Naive thymus-derived CD4-positive, alpha-beta T cell (primary cell): ENCODE measurements at regions of chr9 and their contacts with region 1.

Region 1: GRCh38 chr9:93095205-93096130 is 549 bp upstream of the CARD19 start:
- DNase-seq: peak; percentile 99 to 100 (median 100)
- ATAC-seq: peak; percentile 88
- H3K4me3 ChIP-seq: peak overlapping the region; percentile 72
- H3K4me3 Mint-ChIP-seq: peak overlapping the region; percentile 83 to 95 (median 90)
- H3K27ac ChIP-seq: peak overlapping the region; percentile 93
- H3K27ac Mint-ChIP-seq: peak overlapping the region; percentile 93 to 99 (median 96)
- H3K4me1 ChIP-seq: peaks cover 41 to 58% of the 10 kb centered on the region in 2 donors
- H3K4me1 Mint-ChIP-seq: peaks cover 49 to 81% (median 71%) of the 10 kb centered on the region in 7 donors
- H3K27me3 ChIP-seq: no peaks in the 10 kb centered on the region
- H3K27me3 Mint-ChIP-seq: no peaks in the 10 kb centered on the region

Region 2: DNA sequence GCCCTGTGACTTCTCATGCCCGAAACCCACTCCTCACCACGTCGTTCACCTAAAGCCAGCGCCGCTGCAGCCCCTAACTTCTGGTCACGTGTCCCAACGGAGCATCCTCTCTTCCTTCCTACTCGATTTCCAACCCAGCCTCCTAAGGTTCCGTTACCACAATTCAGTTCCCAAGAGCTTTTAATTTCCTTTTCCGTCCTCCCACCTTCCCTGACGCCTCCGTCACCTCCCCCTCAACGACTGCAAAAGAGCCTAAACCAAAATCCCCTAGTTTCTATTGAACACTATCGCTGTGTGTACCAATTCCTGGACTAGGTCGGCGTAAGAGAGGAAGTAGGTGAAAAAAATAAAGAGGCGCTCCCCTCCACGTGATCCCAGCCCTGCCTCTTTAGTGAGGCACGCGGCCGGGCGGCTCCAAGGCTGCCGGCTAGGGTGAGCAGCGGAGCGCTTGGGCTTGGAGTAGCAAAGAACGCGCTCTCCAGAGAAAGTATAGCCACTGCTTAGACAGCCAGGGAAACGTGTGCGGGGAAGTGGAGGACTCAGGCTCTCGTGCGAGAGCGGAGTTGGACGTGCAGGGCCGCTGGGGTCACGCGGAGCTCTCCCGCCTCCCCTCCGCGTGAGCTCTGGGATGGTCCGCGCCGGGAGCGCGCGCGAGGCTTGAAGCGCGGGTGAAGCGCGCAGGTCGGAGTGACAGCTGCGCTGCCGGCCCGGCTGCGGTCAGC is 770.0 kb before region 1 on chr9 and contains the starts of genes CENPP and NOL8:
- CTCF ChIA-PET with region 1: no interaction called
- POLR2A ChIA-PET with region 1: no interaction called
- intact Hi-C with region 1: loop called in 1 of 2 experiments (anchors 10 kb)
- DNase-seq: peak; percentile 75 to 91 (median 89)
- ATAC-seq: peak; percentile 95
- H3K4me3 ChIP-seq: peak within 1 kb of the TSS; percentile 90
- H3K4me3 Mint-ChIP-seq: peak within 1 kb of the TSS; percentile 94 to 100 (median 98)
- H3K27ac ChIP-seq: peak within 1 kb of the TSS; percentile 88
- H3K27ac Mint-ChIP-seq: peak within 1 kb of the TSS; percentile 97 to 100 (median 99)
- H3K4me1 ChIP-seq: peaks cover 11 to 12% of the 10 kb centered on the region in 2 donors
- H3K4me1 Mint-ChIP-seq: peaks cover 14 to 41% (median 35%) of the 10 kb centered on the region in 7 donors
- H3K27me3 ChIP-seq: no peaks in the 10 kb centered on the region
- H3K27me3 Mint-ChIP-seq: no peaks in the 10 kb centered on the region
- total RNA-seq, gene CENPP: 2.5 to 24.3 (median 4.1) TPM
- total RNA-seq, gene NOL8: 42.8 to 115 (median 67.2) TPM

Region 3: GRCh38 chr9:92877531-92878430 is 217.7 kb before region 1 on chr9 and contains the start of gene ZNF484:
- CTCF ChIA-PET with region 1: no interaction called
- POLR2A ChIA-PET with region 1: no interaction called
- intact Hi-C with region 1: loop called (anchors 1 to 5 kb)
- DNase-seq: peak; percentile 86 to 97 (median 94)
- ATAC-seq: peak; percentile 99
- H3K4me3 ChIP-seq: peak within 1 kb of the TSS; percentile 77
- H3K4me3 Mint-ChIP-seq: peak within 1 kb of the TSS; percentile 91 to 100 (median 99)
- H3K27ac ChIP-seq: peak within 1 kb of the TSS; percentile 90
- H3K27ac Mint-ChIP-seq: peak within 1 kb of the TSS; percentile 94 to 100 (median 99)
- H3K4me1 ChIP-seq: peaks cover 0 to 15% of the 10 kb centered on the region in 2 donors
- H3K4me1 Mint-ChIP-seq: peaks cover 28 to 69% (median 58%) of the 10 kb centered on the region in 7 donors
- H3K27me3 ChIP-seq: no peaks in the 10 kb centered on the region
- H3K27me3 Mint-ChIP-seq: no peaks in the 10 kb centered on the region
- total RNA-seq, gene ZNF484: 12.4 to 25.4 (median 14.0) TPM

Region 4: GRCh38 chr9:93028448-93029006 is 66.9 kb before region 1 on chr9:
- CTCF ChIA-PET with region 1: interaction called, 4 read pairs
- POLR2A ChIA-PET with region 1: interaction called, 39 read pairs
- intact Hi-C with region 1: loop called (anchors 1 kb)
- DNase-seq: peak; percentile 38 to 94 (median 91)
- ATAC-seq: peak; percentile 93
- H3K4me3 ChIP-seq: peak overlapping the region; percentile 49
- H3K4me3 Mint-ChIP-seq: peak overlapping the region; percentile 80 to 91 (median 88)
- H3K27ac ChIP-seq: peak overlapping the region; percentile 90
- H3K27ac Mint-ChIP-seq: peak overlapping the region; percentile 96 to 100 (median 99)
- H3K4me1 ChIP-seq: peaks cover 62 to 93% of the 10 kb centered on the region in 2 donors
- H3K4me1 Mint-ChIP-seq: peaks cover 54 to 93% (median 82%) of the 10 kb centered on the region in 7 donors
- H3K27me3 ChIP-seq: no peaks in the 10 kb centered on the region
- H3K27me3 Mint-ChIP-seq: no peaks in the 10 kb centered on the region

Region 5: GRCh38 chr9:93082841-93083411 is 12.5 kb before region 1 on chr9:
- CTCF ChIA-PET with region 1: interaction called, 5 read pairs
- POLR2A ChIA-PET with region 1: interaction called, 14 read pairs
- intact Hi-C with region 1: loop called in 1 of 2 experiments (anchors 1 kb)
- DNase-seq: peak in 1 of 9 donors; percentile 25
- ATAC-seq: peak; percentile 36
- H3K4me3 ChIP-seq: no peak overlapping the region
- H3K4me3 Mint-ChIP-seq: peak overlapping the region in 7 of 10 donors; percentile 1 to 65 (median 57)
- H3K27ac ChIP-seq: peak overlapping the region; percentile 68
- H3K27ac Mint-ChIP-seq: peak overlapping the region; percentile 49 to 98 (median 95)
- H3K4me1 ChIP-seq: peaks cover 18 to 25% of the 10 kb centered on the region in 2 donors
- H3K4me1 Mint-ChIP-seq: peaks cover 10 to 47% (median 31%) of the 10 kb centered on the region in 7 donors
- H3K27me3 ChIP-seq: no peaks in the 10 kb centered on the region
- H3K27me3 Mint-ChIP-seq: no peaks in the 10 kb centered on the region

Region 6: DNA sequence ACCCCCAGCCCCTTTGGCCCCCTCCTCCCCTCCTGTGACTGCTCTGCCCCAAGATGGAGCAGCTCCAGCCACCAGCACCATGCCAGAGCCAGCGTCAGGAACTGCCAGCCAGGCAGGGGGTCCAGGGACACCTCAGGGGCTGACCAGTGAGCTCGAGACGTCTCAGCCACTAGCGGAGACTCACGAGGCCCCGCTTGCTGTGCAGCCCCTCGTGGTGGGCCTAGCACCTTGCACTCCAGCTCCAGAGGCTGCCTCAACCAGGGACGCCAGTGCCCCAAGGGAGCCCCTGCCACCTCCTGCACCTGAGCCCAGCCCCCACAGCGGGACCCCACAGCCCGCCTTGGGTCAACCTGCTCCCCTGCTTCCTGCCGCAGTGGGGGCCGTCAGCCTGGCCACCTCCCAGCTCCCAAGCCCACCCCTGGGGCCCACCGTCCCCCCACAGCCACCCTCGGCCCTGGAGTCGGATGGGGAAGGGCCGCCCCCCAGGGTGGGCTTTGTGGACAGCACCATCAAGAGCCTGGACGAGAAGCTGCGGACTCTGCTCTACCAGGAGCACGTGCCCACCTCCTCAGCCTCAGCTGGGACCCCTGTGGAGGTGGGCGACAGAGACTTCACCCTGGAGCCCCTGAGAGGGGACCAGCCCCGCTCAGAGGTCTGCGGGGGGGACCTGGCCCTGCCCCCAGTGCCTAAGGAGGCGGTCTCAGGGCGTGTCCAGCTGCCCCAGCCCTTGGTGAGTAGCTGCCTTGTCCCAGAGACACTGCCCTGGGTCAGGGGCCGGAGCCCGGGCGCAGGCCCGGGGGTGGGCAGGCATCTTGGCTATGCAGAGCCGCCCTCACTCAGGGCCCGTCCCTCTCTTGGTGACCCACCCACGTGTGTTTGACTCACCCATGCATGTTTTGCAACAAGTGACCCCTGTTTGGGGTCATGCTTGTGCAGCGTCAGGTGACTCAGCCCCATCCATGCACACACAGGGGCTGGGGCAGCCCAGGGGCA is 193.7 kb after region 1 on chr9:
- CTCF ChIA-PET with region 1: no interaction called
- POLR2A ChIA-PET with region 1: no interaction called
- intact Hi-C with region 1: no loop called
- DNase-seq: no peak
- ATAC-seq: peak; percentile 14
- H3K4me3 ChIP-seq: no peak overlapping the region
- H3K4me3 Mint-ChIP-seq: no peak overlapping the region
- H3K27ac ChIP-seq: no peak overlapping the region
- H3K27ac Mint-ChIP-seq: peak overlapping the region in 1 of 9 donors; percentile 50
- H3K4me1 ChIP-seq: no peaks in the 10 kb centered on the region
- H3K4me1 Mint-ChIP-seq: peaks cover 0 to 11% (median 7%) of the 10 kb centered on the region in 7 donors
- H3K27me3 ChIP-seq: no peaks in the 10 kb centered on the region
- H3K27me3 Mint-ChIP-seq: peaks cover 0 to 14% (median 0%) of the 10 kb centered on the region in 5 donors

Region 7: DNA sequence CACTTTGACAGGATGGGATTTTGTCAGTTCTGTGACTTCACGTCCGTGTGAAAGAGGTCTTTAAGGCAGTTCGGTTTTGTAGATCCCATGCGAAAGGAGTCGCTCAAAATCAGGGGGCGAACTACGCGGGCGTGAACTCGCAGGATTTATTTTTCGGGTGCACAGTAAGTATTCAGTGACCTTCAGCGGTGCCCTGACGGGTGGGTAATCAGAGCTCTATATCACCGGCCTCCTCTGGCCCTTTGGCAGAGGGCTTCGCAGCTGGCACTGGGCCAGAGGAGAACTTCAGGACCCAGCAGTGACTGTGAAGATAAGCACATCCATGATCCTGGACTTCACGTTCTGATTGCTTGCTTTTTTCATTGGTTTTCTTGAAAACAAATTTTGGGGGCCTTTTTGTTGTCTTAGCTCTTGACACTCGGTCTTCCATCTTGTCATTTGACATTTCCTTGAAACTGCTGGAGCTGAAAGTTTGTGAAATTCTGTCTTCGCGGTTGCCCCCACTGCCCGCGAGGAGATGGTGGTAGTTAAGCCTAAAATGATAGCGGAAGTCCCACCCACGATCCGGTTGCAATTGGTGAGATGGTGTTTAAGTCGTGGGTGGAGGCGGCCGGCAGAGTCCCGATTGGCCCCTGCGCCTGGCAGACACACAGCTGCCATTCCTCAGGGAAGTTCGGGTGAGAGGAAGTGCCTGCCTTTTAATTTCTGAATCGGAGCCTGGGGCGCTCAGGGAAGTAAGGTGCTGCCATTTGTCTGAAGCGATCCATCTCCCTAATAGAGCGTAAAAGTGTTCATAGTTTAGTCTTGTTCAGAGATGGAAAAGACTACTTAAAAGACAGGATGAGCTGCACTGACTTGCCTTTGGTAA is 357.8 kb after region 1 on chr9 and contains the start of gene FAM120AOS:
- CTCF ChIA-PET with region 1: no interaction called
- POLR2A ChIA-PET with region 1: no interaction called
- intact Hi-C with region 1: loop called (anchors 1 kb)
- DNase-seq: peak; percentile 50 to 85 (median 76)
- ATAC-seq: peak; percentile 82
- H3K4me3 ChIP-seq: peak within 1 kb of the TSS; percentile 72
- H3K4me3 Mint-ChIP-seq: peak within 1 kb of the TSS; percentile 89 to 100 (median 95)
- H3K27ac ChIP-seq: peak within 1 kb of the TSS; percentile 87
- H3K27ac Mint-ChIP-seq: peak within 1 kb of the TSS; percentile 83 to 96 (median 94)
- H3K4me1 ChIP-seq: peaks cover 31 to 50% of the 10 kb centered on the region in 2 donors
- H3K4me1 Mint-ChIP-seq: peaks cover 39 to 69% (median 57%) of the 10 kb centered on the region in 7 donors
- H3K27me3 ChIP-seq: no peaks in the 10 kb centered on the region
- H3K27me3 Mint-ChIP-seq: no peaks in the 10 kb centered on the region
- total RNA-seq, gene FAM120AOS: 36.7 to 49.5 (median 42.3) TPM

Region 8: DNA sequence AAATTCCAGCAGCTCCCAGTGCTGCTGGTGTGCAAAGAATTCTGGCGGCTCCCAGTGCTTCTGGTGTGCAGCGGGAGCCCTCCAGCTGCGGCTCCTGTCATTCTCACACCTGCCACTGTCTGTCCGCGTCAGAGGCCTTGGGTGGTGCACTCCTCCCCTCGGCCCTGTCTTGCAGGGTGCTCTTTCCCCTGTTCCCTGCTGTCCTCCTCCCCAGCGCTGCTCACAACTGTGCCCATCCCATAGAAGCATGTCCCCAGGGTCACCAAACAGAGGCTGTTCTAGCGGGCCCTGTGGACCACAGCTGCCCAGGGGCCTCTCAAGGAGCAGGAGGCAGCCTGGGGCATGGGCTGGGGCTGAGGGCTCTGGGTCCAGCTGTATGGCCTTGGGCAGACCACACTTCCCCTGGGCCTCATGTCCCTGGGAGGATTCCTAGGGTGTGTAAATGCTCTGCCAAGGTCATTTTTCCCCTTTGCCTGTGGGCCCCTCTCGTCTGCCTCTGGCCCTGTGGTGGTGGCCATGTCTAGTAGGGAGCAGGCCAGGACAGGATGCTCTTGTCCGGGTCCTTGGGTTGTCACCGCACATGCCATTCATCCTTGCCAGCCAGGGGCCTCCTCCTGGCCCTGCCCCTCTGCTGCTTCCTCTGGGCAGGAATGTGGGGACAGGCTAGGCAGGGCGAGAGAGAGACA is 549.1 kb after region 1 on chr9:
- CTCF ChIA-PET with region 1: no interaction called
- POLR2A ChIA-PET with region 1: no interaction called
- intact Hi-C with region 1: no loop called
- DNase-seq: peak in 1 of 9 donors; percentile 12
- ATAC-seq: no peak
- H3K4me3 ChIP-seq: no peak overlapping the region
- H3K4me3 Mint-ChIP-seq: no peak overlapping the region
- H3K27ac ChIP-seq: no peak overlapping the region
- H3K27ac Mint-ChIP-seq: peak overlapping the region in 1 of 9 donors; percentile 65
- H3K4me1 ChIP-seq: no peaks in the 10 kb centered on the region
- H3K4me1 Mint-ChIP-seq: peaks cover 0 to 7% (median 3%) of the 10 kb centered on the region in 7 donors
- H3K27me3 ChIP-seq: no peaks in the 10 kb centered on the region
- H3K27me3 Mint-ChIP-seq: no peaks in the 10 kb centered on the region